Activated CD4-positive, alpha-beta T cell treated with anti-CD3 and anti-CD28 coated beads, Interleukin-2, amount 10 ng/mL, durations not matched to agents 7 days and 5 days (primary cell): ENCODE measurements at regions of chr10 and their contacts with region 1.

Region 1: DNA sequence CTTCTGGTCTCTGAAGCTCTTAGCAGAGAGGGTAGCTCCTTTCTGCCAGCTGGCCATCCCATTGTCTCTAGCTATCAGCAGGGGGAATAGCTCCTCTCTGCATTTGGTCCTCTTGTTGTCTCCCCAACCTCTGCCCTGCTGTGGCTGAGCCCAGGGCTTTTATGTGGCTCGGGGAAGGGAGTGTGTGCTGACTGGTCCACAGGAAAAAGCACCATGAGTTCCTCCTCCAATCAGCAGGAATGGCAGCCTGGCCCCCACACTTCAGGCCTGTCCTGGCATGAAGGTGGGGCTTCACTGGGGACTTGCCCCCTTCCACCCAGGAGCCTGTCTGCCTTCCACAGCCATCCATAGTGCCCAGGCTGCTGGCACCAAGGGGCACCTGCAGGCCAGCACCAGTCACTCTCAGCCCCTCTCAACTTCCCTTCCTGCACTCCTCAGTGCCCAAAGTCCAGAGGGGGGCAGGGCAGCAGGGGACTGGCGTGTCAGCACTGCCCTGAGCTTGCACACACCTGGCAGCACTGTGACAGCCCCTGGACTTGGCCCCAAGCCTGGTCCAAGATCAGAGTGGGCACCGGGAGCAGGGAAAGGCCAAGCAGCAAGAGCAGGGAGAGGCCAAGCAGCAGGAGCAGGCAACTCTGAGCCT is 36.2 kb downstream of the NOLC1 start:
- DNase-seq: no peak
- H3K4me3 Mint-ChIP-seq: no peak overlapping the region
- H3K27ac Mint-ChIP-seq: peak overlapping the region; percentile 99
- H3K4me1 Mint-ChIP-seq: peaks cover 20% of the 10 kb centered on the region
- H3K27me3 Mint-ChIP-seq: peaks cover 6% of the 10 kb centered on the region

Region 2: DNA sequence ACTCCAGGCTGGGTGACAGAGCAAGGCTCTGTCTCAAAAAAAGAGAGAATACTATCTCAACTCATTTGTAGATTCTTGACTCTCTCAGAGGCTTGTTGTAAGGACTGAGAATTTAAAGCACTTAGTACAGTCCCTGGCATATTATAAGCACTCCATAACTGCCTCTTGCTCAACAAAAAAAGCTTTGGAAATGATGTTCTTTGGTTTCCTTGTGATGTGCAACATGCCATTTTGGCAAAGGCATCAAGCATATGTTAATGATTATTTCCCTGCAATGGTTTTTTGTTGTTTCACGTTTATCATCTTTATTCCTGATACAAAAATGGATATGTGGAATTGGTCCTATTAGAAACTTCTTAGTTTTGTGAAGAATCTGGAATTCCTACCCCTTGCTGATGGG is 20.6 kb before region 1 on chr10:
- CTCF ChIA-PET with region 1: interaction called, 14 read pairs
- POLR2A ChIA-PET with region 1: no interaction called
- DNase-seq: no peak
- H3K4me3 Mint-ChIP-seq: no peak overlapping the region
- H3K27ac Mint-ChIP-seq: no peak overlapping the region
- H3K4me1 Mint-ChIP-seq: peaks cover 24% of the 10 kb centered on the region
- H3K27me3 Mint-ChIP-seq: no peaks in the 10 kb centered on the region

Region 3: GRCh38 chr10:102200751-102201640 is 12.6 kb after region 1 on chr10:
- CTCF ChIA-PET with region 1: interaction called, 18 read pairs
- POLR2A ChIA-PET with region 1: no interaction called
- DNase-seq: no peak
- H3K4me3 Mint-ChIP-seq: no peak overlapping the region
- H3K27ac Mint-ChIP-seq: no peak overlapping the region
- H3K4me1 Mint-ChIP-seq: peaks cover 6% of the 10 kb centered on the region
- H3K27me3 Mint-ChIP-seq: peaks cover 7% of the 10 kb centered on the region